ENCODE measurements at regions of chr2 and their contacts with region 1.

Region 1: DNA sequence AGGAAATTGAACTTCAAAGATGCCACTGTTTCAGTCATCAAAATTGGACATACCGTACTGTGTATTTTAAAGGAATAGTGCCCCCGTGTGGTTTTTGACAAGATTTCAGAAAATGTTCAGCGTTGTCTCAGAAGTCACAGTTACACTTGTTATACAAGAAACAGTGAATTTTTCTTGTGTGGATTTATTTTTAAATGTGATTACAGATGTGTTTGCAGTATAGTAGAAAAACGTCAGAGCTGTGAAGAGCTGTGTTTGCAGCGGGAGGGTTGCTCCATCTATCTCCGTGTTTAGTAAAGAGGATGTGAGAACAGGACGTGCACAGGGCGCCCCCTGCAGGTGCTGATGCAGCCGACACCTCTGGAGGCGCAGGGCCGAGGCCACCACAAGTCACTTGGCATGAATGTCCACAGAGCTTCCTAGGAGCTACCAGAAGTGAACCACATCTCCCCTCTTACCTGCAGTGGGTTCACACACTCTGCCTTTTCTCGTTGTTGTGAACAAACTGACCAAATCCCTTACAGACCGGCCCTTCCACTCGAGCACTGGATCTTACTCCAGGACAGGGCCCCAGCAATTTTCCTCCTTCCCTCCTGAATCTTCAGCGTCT is 73.1 kb downstream of the CACNB4 start:
- DNase-seq: peak; percentile 76
- ATAC-seq: peak; percentile 98
- H3K4me3 ChIP-seq: peak overlapping the region in 2 of 3 experiments; percentile 47 to 59; a peak in 4 of 6 replicates
- H3K27ac ChIP-seq: no peak overlapping the region
- H3K4me1 ChIP-seq: peaks cover 15% of the 10 kb centered on the region; the same call in 1 of the 2 replicates
- H3K27me3 ChIP-seq: no peaks in the 10 kb centered on the region
- CTCF ChIP-seq: peak; percentile 97
- EP300 ChIP-seq: 0 out of 4 replicates have a peak, but pooled peaks of 1 of the 2 experiments have one; percentile 23
- POLR2A ChIP-seq: no peak
- RAD21 ChIP-seq: peak; percentile 94

Region 2: DNA sequence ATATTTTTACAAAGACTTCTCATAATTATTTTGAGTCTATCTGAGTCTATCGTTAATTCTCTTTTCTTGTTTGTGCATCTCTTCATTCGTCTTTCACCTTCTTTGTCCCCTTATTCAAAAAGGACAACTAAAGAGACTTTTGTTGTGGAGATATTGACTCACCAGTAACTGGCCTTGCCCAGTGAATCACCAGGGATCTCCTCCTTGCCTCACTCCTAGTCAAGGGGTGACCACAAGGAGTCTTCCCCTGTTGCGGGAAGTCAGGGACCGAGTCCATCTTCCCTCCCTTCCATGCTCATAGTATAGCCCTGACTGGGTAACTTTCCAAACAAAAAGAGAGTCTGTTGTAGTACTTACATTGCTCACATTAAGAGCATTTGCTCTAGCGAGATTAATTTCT is 450.4 kb before region 1 on chr2:
- CTCF ChIA-PET with region 1: no interaction called
- POLR2A ChIA-PET with region 1: no interaction called
- in situ Hi-C with region 1: no loop called
- intact Hi-C with region 1: loop called (anchors 10 kb)
- DNase-seq: no peak
- ATAC-seq: no peak
- H3K4me3 ChIP-seq: no peak overlapping the region
- H3K27ac ChIP-seq: no peak overlapping the region
- H3K4me1 ChIP-seq: no peaks in the 10 kb centered on the region
- H3K27me3 ChIP-seq: no peaks in the 10 kb centered on the region
- CTCF ChIP-seq: no peak
- EP300 ChIP-seq: no peak
- POLR2A ChIP-seq: no peak
- RAD21 ChIP-seq: no peak

Region 3: GRCh38 chr2:151681051-151681450 is 344.7 kb before region 1 on chr2:
- CTCF ChIA-PET with region 1: no interaction called
- POLR2A ChIA-PET with region 1: no interaction called
- in situ Hi-C with region 1: no loop called
- intact Hi-C with region 1: no loop called
- DNase-seq: no peak
- ATAC-seq: no peak
- H3K4me3 ChIP-seq: no peak overlapping the region
- H3K27ac ChIP-seq: no peak overlapping the region
- H3K4me1 ChIP-seq: no peaks in the 10 kb centered on the region
- H3K27me3 ChIP-seq: peaks cover 1 to 17% of the 10 kb centered on the region in 2 experiments; a peak in 3 of 5 replicates
- CTCF ChIP-seq: no peak
- EP300 ChIP-seq: no peak
- POLR2A ChIP-seq: no peak
- RAD21 ChIP-seq: no peak

Region 4: DNA sequence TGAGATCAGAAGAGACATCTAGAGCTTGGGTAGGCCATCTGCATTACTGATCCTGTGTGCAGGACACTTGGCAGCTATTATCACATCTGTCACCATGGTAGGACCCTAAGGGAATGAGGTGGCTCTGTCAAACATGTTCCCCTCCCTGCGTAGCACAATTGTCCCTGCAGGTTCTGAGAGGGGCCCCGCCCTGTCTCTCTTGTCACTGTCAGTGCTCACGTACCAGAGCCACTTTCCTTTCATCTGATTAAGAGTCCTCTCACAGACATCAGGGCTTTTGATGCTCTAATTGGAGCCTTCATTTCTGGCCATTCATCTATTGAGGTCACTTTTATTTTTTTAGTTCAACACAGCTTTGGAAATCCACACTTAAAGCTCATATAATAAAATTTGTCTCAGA is 330.0 kb before region 1 on chr2:
- CTCF ChIA-PET with region 1: no interaction called
- POLR2A ChIA-PET with region 1: no interaction called
- in situ Hi-C with region 1: no loop called
- intact Hi-C with region 1: no loop called
- DNase-seq: no peak
- ATAC-seq: no peak
- H3K4me3 ChIP-seq: no peak overlapping the region
- H3K27ac ChIP-seq: no peak overlapping the region
- H3K4me1 ChIP-seq: no peaks in the 10 kb centered on the region
- H3K27me3 ChIP-seq: 0 out of 5 replicates have a peak, but pooled peaks cover 0 to 11% of the 10 kb centered on the region in 2 experiments
- CTCF ChIP-seq: no peak
- EP300 ChIP-seq: no peak
- POLR2A ChIP-seq: no peak
- RAD21 ChIP-seq: no peak

Region 5: GRCh38 chr2:151777487-151777886 is 248.3 kb before region 1 on chr2:
- CTCF ChIA-PET with region 1: interaction called, 18 read pairs
- POLR2A ChIA-PET with region 1: no interaction called
- in situ Hi-C with region 1: no loop called
- intact Hi-C with region 1: no loop called
- DNase-seq: peak; percentile 32
- ATAC-seq: peak; percentile 86
- H3K4me3 ChIP-seq: no peak overlapping the region
- H3K27ac ChIP-seq: no peak overlapping the region
- H3K4me1 ChIP-seq: no peaks in the 10 kb centered on the region
- H3K27me3 ChIP-seq: no peaks in the 10 kb centered on the region
- CTCF ChIP-seq: peak; percentile 41
- EP300 ChIP-seq: no peak
- POLR2A ChIP-seq: no peak
- RAD21 ChIP-seq: no peak

Region 6: GRCh38 chr2:151872463-151872862 is 153.3 kb before region 1 on chr2:
- CTCF ChIA-PET with region 1: no interaction called
- POLR2A ChIA-PET with region 1: no interaction called
- in situ Hi-C with region 1: no loop called
- intact Hi-C with region 1: no loop called
- DNase-seq: no peak
- ATAC-seq: no peak
- H3K4me3 ChIP-seq: no peak overlapping the region
- H3K27ac ChIP-seq: no peak overlapping the region
- H3K4me1 ChIP-seq: no peaks in the 10 kb centered on the region
- H3K27me3 ChIP-seq: no peaks in the 10 kb centered on the region
- CTCF ChIP-seq: no peak
- EP300 ChIP-seq: no peak
- POLR2A ChIP-seq: no peak
- RAD21 ChIP-seq: no peak

Region 7: DNA sequence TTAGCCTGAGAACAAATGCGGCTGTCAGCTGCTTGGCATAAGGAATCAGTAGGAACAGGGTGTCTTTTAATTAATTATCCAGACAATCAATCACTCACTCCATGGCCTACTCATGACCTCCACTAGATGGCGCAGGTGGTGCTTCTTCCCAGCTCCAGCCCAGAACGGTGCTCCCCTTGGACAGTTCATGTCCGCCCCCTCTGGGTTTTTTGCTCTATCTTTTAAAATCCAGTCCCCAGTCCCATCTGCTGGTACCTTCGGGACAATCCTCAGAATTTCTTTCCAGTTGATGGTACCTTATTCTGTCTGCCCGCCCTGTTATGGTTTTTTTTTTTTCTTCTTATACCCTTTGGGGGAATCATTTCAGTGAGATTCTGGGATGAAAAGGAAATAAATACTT is 26.7 kb before region 1 on chr2:
- CTCF ChIA-PET with region 1: interaction called, 52 read pairs
- POLR2A ChIA-PET with region 1: no interaction called
- in situ Hi-C with region 1: no loop called
- intact Hi-C with region 1: loop called (anchors 1 kb)
- DNase-seq: peak; percentile 77
- ATAC-seq: peak; percentile 64
- H3K4me3 ChIP-seq: no peak overlapping the region
- H3K27ac ChIP-seq: no peak overlapping the region
- H3K4me1 ChIP-seq: peaks cover 55% of the 10 kb centered on the region
- H3K27me3 ChIP-seq: no peaks in the 10 kb centered on the region
- CTCF ChIP-seq: peak; percentile 85
- EP300 ChIP-seq: no peak
- POLR2A ChIP-seq: no peak
- RAD21 ChIP-seq: peak; percentile 86

Region 8: DNA sequence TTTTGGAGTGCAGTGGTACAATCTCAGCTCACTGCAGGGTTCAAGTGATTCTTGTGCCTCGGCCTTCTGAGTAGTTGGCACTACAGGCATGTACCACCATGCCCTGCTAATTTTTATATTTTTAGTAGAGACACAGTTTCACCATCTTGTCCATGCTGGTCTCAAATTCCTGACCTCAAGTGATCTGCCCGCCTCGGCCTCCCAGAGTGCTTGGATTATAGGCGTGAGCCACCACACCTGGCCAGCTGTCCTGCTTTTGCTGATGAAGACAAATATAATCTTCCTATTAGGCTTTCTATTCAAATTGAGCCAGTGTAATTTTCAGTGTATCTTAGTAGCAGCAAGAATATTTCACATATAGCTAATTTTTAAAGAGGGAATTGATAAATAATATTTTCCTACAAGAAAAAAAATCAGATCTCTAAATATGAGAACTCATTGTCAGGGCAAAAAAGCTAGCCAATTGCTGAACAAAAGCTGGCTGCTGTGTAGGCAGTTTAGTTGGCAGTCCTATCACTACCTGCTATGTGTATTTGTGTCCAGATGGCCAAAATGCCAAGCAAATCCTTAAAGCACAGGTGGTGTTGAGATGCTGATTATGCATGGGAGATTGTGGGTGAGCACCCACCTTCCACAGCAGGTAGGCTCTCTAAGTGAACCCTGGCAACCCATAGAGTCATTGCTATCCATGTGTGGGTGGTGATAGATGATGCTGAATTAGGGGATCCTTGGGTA is 210.6 kb after region 1 on chr2:
- CTCF ChIA-PET with region 1: no interaction called
- POLR2A ChIA-PET with region 1: no interaction called
- in situ Hi-C with region 1: no loop called
- intact Hi-C with region 1: no loop called
- DNase-seq: no peak
- ATAC-seq: no peak
- H3K4me3 ChIP-seq: no peak overlapping the region
- H3K27ac ChIP-seq: no peak overlapping the region
- H3K4me1 ChIP-seq: no peaks in the 10 kb centered on the region
- H3K27me3 ChIP-seq: no peaks in the 10 kb centered on the region; a peak in 1 of 5 replicates
- CTCF ChIP-seq: no peak
- EP300 ChIP-seq: no peak
- POLR2A ChIP-seq: no peak
- RAD21 ChIP-seq: no peak

Measured in HepG2 (cell line).